HepG2 (cell line): ENCODE measurements at regions of chr12 and their contacts with region 1.

Region 1: GRCh38 chr12:47850153-47851084 is 30.7 kb upstream of the HDAC7 start:
- DNase-seq: peak; percentile 58
- ATAC-seq: peak; percentile 49
- H3K4me3 ChIP-seq: no peak overlapping the region
- H3K27ac ChIP-seq: no peak overlapping the region
- H3K4me1 ChIP-seq: peaks cover 36% of the 10 kb centered on the region
- H3K27me3 ChIP-seq: no peaks in the 10 kb centered on the region
- CTCF ChIP-seq: no peak
- EP300 ChIP-seq: no peak
- POLR2A ChIP-seq: no peak
- RAD21 ChIP-seq: no peak

Region 2: GRCh38 chr12:47767216-47767724 is 83.1 kb before region 1 on chr12:
- CTCF ChIA-PET with region 1: no interaction called
- POLR2A ChIA-PET with region 1: no interaction called
- in situ Hi-C with region 1: no loop called
- intact Hi-C with region 1: no loop called
- DNase-seq: peak; percentile 53
- ATAC-seq: peak; percentile 39
- H3K4me3 ChIP-seq: no peak overlapping the region
- H3K27ac ChIP-seq: no peak overlapping the region
- H3K4me1 ChIP-seq: peaks cover 39% of the 10 kb centered on the region
- H3K27me3 ChIP-seq: peaks cover 4 to 19% of the 10 kb centered on the region in 2 experiments; a peak in 3 of 5 replicates
- CTCF ChIP-seq: peak; percentile 68
- EP300 ChIP-seq: no peak
- POLR2A ChIP-seq: no peak
- RAD21 ChIP-seq: no peak

Region 3: GRCh38 chr12:47793015-47793681 is 57.3 kb before region 1 on chr12:
- CTCF ChIA-PET with region 1: no interaction called
- POLR2A ChIA-PET with region 1: no interaction called
- in situ Hi-C with region 1: no loop called
- intact Hi-C with region 1: no loop called
- DNase-seq: no peak
- ATAC-seq: no peak
- H3K4me3 ChIP-seq: no peak overlapping the region
- H3K27ac ChIP-seq: no peak overlapping the region
- H3K4me1 ChIP-seq: no peaks in the 10 kb centered on the region
- H3K27me3 ChIP-seq: no peaks in the 10 kb centered on the region
- CTCF ChIP-seq: no peak
- EP300 ChIP-seq: no peak
- POLR2A ChIP-seq: no peak
- RAD21 ChIP-seq: no peak

Region 4: GRCh38 chr12:47819896-47820630 is 30.4 kb before region 1 on chr12 and contains the start of gene HDAC7:
- CTCF ChIA-PET with region 1: no interaction called
- POLR2A ChIA-PET with region 1: interaction called, 11 read pairs
- in situ Hi-C with region 1: no loop called
- intact Hi-C with region 1: no loop called
- DNase-seq: peak; percentile 62
- ATAC-seq: peak; percentile 47
- H3K4me3 ChIP-seq: peak within 1 kb of the TSS; percentile 69 to 86 (median 78)
- H3K27ac ChIP-seq: peak within 1 kb of the TSS; percentile 65
- H3K4me1 ChIP-seq: peaks cover 49% of the 10 kb centered on the region
- H3K27me3 ChIP-seq: peaks cover 0 to 31% of the 10 kb centered on the region in 2 experiments; a peak in 3 of 5 replicates
- CTCF ChIP-seq: peak; percentile 2; the same call in 1 of the 2 replicates
- EP300 ChIP-seq: no peak
- POLR2A ChIP-seq: peak in 1 of 2 experiments; percentile 56; a peak in 2 of 4 replicates
- RAD21 ChIP-seq: no peak
- total RNA-seq, gene HDAC7: 3.7 and 4.6 TPM in 2 replicates

Region 5: GRCh38 chr12:47904713-47905310 is 54.4 kb after region 1 on chr12 and contains the start of gene VDR:
- CTCF ChIA-PET with region 1: no interaction called
- POLR2A ChIA-PET with region 1: no interaction called
- in situ Hi-C with region 1: no loop called
- intact Hi-C with region 1: no loop called
- DNase-seq: peak; percentile 28
- ATAC-seq: peak; percentile 31
- H3K4me3 ChIP-seq: peak within 1 kb of the TSS; percentile 30 to 60 (median 42); a peak in 5 of 6 replicates
- H3K27ac ChIP-seq: no peak within 1 kb of the TSS
- H3K4me1 ChIP-seq: peaks cover 59% of the 10 kb centered on the region
- H3K27me3 ChIP-seq: peaks cover 0 to 31% of the 10 kb centered on the region in 2 experiments; a peak in 3 of 5 replicates
- CTCF ChIP-seq: no peak
- EP300 ChIP-seq: no peak
- POLR2A ChIP-seq: no peak
- RAD21 ChIP-seq: no peak
- total RNA-seq, gene VDR: 0.21 and 0.33 TPM in 2 replicates